AG04450 (cell line): ENCODE measurements at regions of chr17 and their contacts with region 1.

Region 1: DNA sequence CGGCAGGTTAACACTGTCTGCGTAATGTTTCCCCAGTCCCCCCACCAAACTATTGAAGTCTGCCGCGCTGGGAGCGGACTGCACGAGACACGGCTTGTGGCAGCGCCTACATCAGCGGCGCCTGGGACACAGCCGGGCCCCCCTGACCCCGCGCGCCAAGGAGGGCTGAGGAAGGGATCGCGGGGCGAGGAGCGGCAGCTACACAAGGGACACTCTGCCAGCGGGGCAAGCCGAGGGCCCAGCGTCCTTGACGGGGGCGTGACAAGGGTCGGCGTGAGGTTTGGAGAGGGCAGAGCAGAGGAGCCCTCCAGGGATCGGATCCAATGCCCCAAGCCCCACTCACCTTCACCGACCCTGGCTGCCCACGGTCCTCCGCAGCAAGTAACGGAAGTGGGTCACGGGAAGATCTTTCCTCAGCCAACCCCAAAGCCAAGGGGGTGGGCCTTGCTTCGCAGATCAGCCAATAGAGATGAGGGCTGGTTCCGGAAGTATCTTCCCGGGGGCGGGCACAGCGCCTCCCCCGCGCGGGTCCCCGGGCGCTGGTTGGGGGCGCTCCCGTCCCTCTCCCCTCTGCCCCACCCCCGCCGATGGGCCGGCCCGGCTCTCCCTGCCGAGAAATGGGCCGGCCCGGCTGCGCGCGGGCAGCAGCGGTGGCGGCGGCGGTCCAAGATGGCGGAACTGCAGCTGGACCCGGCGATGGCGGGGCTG is at the starts of genes ATP5PD and KCTD2:
- DNase-seq: peak; percentile 90
- H3K4me3 ChIP-seq: peak within 1 kb of the TSS; percentile 98
- H3K27ac ChIP-seq: peak within 1 kb of the TSS; percentile 97
- H3K27me3 ChIP-seq: no peaks in the 10 kb centered on the region
- CTCF ChIP-seq: no peak
- polyA plus RNA-seq, gene ATP5PD: 281 and 292 TPM in 2 replicates
- polyA plus RNA-seq, gene KCTD2: 29.8 and 36.0 TPM in 2 replicates

Region 2: GRCh38 chr17:75087558-75088453 is 41.1 kb after region 1 on chr17 and contains the start of gene SLC16A5:
- CTCF ChIA-PET with region 1: no interaction called
- POLR2A ChIA-PET with region 1: no interaction called
- DNase-seq: no peak
- H3K4me3 ChIP-seq: peak within 1 kb of the TSS; percentile 61
- H3K27ac ChIP-seq: peak within 1 kb of the TSS; percentile 75
- H3K27me3 ChIP-seq: no peaks in the 10 kb centered on the region
- CTCF ChIP-seq: no peak
- polyA plus RNA-seq, gene SLC16A5: 2.9 and 3.6 TPM in 2 replicates

Region 3: DNA sequence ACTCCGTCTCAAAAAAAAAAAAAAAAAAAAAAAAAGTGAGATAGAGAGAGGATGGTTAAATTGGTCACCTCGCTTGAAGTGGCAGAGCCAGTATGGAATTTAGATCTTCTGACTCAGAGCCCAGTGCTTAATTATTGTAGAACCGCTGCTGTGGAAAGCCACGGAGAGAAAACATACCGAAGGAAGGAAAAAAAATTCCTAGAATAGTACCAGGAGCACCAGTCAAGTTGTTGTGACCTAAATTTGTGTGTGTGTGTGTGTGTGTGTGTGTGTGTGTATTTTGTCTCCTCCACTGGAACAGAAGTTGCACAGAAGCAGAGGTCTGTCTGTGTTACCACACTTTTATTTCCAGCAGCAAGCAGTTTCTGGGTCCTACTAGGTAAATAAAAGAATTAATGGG is 148.1 kb after region 1 on chr17:
- CTCF ChIA-PET with region 1: no interaction called
- POLR2A ChIA-PET with region 1: no interaction called
- DNase-seq: no peak
- H3K4me3 ChIP-seq: no peak overlapping the region
- H3K27ac ChIP-seq: no peak overlapping the region
- H3K27me3 ChIP-seq: no peaks in the 10 kb centered on the region
- CTCF ChIP-seq: no peak

Region 4: DNA sequence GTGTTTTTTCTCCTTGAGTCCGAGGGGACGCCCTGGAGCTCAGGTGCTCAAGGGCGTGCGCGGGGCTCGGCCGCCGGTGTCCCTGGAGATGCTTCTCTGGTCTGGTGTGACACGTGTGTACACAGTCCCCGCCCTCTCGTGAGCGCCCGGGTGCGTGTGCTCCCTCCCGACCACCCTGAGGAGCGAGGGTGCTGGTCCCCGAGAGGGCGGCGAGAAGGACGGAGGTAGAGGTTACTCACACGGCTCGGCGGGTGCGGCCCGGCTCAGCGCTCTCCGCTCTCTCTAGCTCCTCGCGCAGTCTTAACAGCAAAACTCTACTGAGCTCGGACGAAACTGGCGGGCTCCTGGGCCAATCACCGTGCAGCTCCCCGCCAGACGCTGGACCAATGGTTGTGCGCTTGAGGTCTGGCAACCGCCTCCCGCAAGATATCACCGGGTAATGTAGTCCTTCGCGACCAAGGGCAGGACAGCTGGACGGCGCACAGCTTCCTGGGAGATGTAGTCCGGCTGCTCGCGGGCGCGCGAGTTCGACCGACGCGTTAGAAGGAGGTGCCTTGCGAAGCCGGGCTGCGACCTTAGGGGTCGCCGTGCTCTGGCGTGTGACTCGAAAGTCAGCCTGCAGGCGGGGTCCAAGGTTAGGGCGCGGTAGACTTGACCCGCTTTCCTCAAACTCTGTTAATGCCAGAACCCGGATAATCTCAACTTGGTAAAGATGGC is 242.5 kb after region 1 on chr17 and contains the start of gene SLC25A19:
- CTCF ChIA-PET with region 1: no interaction called
- POLR2A ChIA-PET with region 1: interaction called, 17 read pairs
- DNase-seq: peak; percentile 97
- H3K4me3 ChIP-seq: peak within 1 kb of the TSS; percentile 91
- H3K27ac ChIP-seq: peak within 1 kb of the TSS; percentile 89
- H3K27me3 ChIP-seq: no peaks in the 10 kb centered on the region
- CTCF ChIP-seq: no peak
- polyA plus RNA-seq, gene SLC25A19: 3.5 and 4.4 TPM in 2 replicates